AG04450 (cell line): ENCODE measurements at regions of chr6 and their contacts with region 1.

Region 1: GRCh38 chr6:7282097-7282906 is 30.7 kb downstream of the SSR1 start:
- DNase-seq: no peak
- H3K4me3 ChIP-seq: no peak overlapping the region
- H3K27ac ChIP-seq: no peak overlapping the region
- H3K27me3 ChIP-seq: no peaks in the 10 kb centered on the region
- CTCF ChIP-seq: no peak

Region 2: DNA sequence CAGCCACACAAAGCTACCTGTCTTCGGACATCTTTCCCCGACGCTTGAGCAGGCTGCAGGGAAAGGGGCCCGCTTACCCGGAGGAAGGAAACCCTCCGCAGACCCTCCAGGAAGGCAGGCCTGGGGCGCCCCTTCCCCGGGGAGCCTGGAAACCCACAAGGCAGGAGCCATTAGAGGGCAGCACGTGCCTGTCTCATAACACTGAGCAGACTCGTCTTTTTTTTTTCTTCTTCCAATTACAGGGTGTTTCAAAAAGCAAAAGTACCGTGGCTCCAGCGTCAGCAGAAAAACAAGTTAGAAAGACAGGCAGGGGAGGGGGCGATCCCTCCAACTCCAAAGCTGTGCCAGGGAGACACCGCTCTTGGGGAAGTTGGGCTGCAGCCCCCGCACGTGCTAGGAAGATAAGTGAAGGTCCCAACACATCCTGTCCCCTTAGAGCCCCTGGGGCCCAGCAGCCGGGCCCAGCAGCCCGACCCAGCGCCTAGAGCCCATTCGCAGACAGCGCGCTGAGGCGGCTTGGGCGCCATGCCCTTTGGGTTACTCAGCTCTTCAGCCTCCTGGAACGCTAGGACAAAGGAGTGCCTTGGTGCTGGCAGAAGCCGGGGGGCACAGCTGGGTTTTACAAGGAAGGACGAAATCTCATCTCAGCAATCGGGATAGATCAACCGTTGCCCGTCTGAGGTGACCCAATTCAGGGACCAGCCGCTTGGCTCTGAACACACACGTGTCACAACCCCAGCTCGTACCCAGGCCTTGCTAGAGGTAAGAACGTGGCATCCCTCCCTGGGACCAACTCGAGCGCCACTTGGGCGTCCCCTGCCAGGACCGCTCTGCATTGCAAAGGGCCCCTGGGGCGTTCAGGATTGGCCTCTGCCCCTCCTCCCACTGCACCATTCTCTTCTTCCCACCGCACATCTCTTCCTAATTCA is 557.5 kb before region 1 on chr6:
- CTCF ChIA-PET with region 1: interaction called, 12 read pairs
- POLR2A ChIA-PET with region 1: no interaction called
- DNase-seq: peak; percentile 45
- H3K4me3 ChIP-seq: peak overlapping the region; percentile 50
- H3K27ac ChIP-seq: peak overlapping the region; percentile 47
- H3K27me3 ChIP-seq: peaks cover 6% of the 10 kb centered on the region
- CTCF ChIP-seq: peak; percentile 69